Naive thymus-derived CD4-positive, alpha-beta T cell (primary cell): ENCODE measurements at regions of chr1 and their contacts with region 1.

Region 1: DNA sequence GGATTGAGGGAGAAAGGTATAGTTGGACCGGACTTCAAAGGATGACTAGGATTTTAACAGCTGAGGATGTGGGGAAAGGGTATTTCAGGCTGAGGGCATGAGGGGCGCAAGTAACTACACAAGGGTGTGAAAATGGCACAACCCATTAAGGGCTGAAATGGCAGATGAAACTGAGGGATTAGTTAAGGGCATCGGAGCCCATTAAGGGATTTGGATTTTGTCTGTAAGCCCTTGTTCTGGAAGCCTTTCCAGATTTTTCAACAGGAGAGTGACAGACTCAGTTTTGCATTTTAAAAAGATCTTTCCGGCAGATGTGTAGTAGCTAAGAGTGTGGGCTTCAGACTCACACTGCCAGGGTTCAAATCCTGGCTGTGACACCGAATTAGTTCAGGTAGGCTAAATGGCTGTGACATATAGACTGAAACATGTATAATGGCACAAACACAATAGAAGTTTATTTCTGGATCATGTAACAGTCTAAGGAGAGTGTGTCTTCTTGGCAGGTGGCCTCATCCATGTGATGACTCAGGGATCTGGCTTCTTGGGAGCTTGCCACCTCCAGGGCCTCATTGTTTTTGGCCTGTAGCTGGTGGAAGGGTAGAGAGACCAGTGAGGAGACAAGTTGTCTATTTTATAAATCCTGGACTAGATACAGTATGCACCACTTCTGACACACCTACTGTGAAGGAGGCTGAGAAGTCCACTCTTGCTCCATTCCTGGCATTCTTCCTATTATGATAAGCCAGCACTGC is 49.6 kb downstream of the UBE2T start:
- DNase-seq: no peak
- ATAC-seq: no peak
- H3K4me3 ChIP-seq: no peak overlapping the region
- H3K4me3 Mint-ChIP-seq: no peak overlapping the region
- H3K27ac ChIP-seq: no peak overlapping the region
- H3K27ac Mint-ChIP-seq: peak overlapping the region in 2 of 9 donors; percentile 8 to 23
- H3K4me1 ChIP-seq: peaks cover 10 to 20% of the 10 kb centered on the region in 2 donors
- H3K4me1 Mint-ChIP-seq: peaks cover 11 to 25% (median 15%) of the 10 kb centered on the region in 7 donors
- H3K27me3 ChIP-seq: no peaks in the 10 kb centered on the region
- H3K27me3 Mint-ChIP-seq: peaks cover 0 to 30% (median 0%) of the 10 kb centered on the region in 5 donors

Region 2: GRCh38 chr1:201970334-201971159 is 321.6 kb before region 1 on chr1:
- CTCF ChIA-PET with region 1: no interaction called
- POLR2A ChIA-PET with region 1: no interaction called
- intact Hi-C with region 1: no loop called
- DNase-seq: no peak
- ATAC-seq: no peak
- H3K4me3 ChIP-seq: no peak overlapping the region
- H3K4me3 Mint-ChIP-seq: no peak overlapping the region
- H3K27ac ChIP-seq: no peak overlapping the region
- H3K27ac Mint-ChIP-seq: no peak overlapping the region
- H3K4me1 ChIP-seq: no peaks in the 10 kb centered on the region
- H3K4me1 Mint-ChIP-seq: peaks cover 0 to 2% (median 0%) of the 10 kb centered on the region in 7 donors
- H3K27me3 ChIP-seq: no peaks in the 10 kb centered on the region
- H3K27me3 Mint-ChIP-seq: peaks cover 0 to 15% (median 0%) of the 10 kb centered on the region in 5 donors

Region 3: GRCh38 chr1:202274611-202275010 is 17.5 kb before region 1 on chr1:
- CTCF ChIA-PET with region 1: interaction called, 3 read pairs
- POLR2A ChIA-PET with region 1: no interaction called
- intact Hi-C with region 1: loop called in 1 of 2 experiments (anchors 1 kb)
- DNase-seq: peak in 4 of 9 donors; percentile 8 to 31 (median 16)
- ATAC-seq: peak; percentile 57
- H3K4me3 ChIP-seq: no peak overlapping the region
- H3K4me3 Mint-ChIP-seq: no peak overlapping the region
- H3K27ac ChIP-seq: no peak overlapping the region
- H3K27ac Mint-ChIP-seq: no peak overlapping the region
- H3K4me1 ChIP-seq: no peaks in the 10 kb centered on the region
- H3K4me1 Mint-ChIP-seq: peaks cover 0 to 4% (median 0%) of the 10 kb centered on the region in 7 donors
- H3K27me3 ChIP-seq: no peaks in the 10 kb centered on the region
- H3K27me3 Mint-ChIP-seq: peaks cover 0 to 13% (median 4%) of the 10 kb centered on the region in 5 donors

Region 4: GRCh38 chr1:202599677-202600431 is 307.7 kb after region 1 on chr1:
- CTCF ChIA-PET with region 1: no interaction called
- POLR2A ChIA-PET with region 1: no interaction called
- intact Hi-C with region 1: no loop called
- DNase-seq: peak in 1 of 9 donors; percentile 38
- ATAC-seq: peak; percentile 40
- H3K4me3 ChIP-seq: no peak overlapping the region
- H3K4me3 Mint-ChIP-seq: no peak overlapping the region
- H3K27ac ChIP-seq: no peak overlapping the region
- H3K27ac Mint-ChIP-seq: no peak overlapping the region
- H3K4me1 ChIP-seq: no peaks in the 10 kb centered on the region
- H3K4me1 Mint-ChIP-seq: peaks cover 0 to 6% (median 0%) of the 10 kb centered on the region in 7 donors
- H3K27me3 ChIP-seq: no peaks in the 10 kb centered on the region
- H3K27me3 Mint-ChIP-seq: no peaks in the 10 kb centered on the region